Activated CD4-positive, alpha-beta memory T cell treated with anti-CD3 and anti-CD28 coated beads for 36 hours (primary cell): ENCODE measurements at regions of chr10 and their contacts with region 1.

Region 1: GRCh38 chr10:73167783-73168464 is at the starts of genes ECD and FAM149B1:
- DNase-seq: peak; percentile 96
- H3K4me3 Mint-ChIP-seq: peak within 1 kb of the TSS; percentile 100
- H3K27ac Mint-ChIP-seq: peak within 1 kb of the TSS; percentile 97
- H3K4me1 Mint-ChIP-seq: peaks cover 35% of the 10 kb centered on the region
- H3K27me3 Mint-ChIP-seq: no peaks in the 10 kb centered on the region
- total RNA-seq, gene ECD: 37.5 to 37.7 TPM
- total RNA-seq, gene FAM149B1: 12.8 to 14.6 TPM

Region 2: GRCh38 chr10:72354478-72355213 is 813.3 kb before region 1 on chr10 and contains the start of gene DNAJB12:
- CTCF ChIA-PET with region 1: no interaction called
- POLR2A ChIA-PET with region 1: no interaction called
- intact Hi-C with region 1: loop called (anchors 2 kb)
- DNase-seq: peak; percentile 93
- H3K4me3 Mint-ChIP-seq: peak within 1 kb of the TSS; percentile 97
- H3K27ac Mint-ChIP-seq: peak within 1 kb of the TSS; percentile 96
- H3K4me1 Mint-ChIP-seq: peaks cover 35% of the 10 kb centered on the region
- H3K27me3 Mint-ChIP-seq: no peaks in the 10 kb centered on the region
- total RNA-seq, gene DNAJB12: 18.9 to 19.8 TPM

Region 3: DNA sequence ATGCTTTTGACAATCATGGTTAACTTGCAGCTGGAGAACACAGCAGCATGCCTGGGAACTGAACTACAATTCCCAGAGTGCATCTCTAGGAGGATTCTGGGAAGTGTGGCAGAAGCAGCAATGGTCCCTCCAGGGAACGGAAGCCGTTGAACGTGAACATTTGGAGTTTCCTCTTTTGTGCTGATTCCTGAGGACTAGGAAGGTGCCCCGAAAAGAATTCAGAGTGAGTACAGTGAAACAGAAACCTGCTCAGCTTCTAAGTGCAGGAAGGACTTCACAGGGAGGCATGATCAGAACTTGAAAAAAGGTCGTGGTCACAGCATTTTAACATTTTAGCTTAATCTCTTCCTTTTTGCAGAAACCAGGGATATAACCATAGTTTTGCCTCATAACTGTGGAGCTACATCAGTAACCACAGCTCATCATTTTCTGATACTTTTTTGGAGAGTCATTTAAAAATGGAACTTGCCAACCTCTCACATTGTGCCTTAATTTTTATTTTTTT is 57.5 kb before region 1 on chr10 and contains the start of gene NUDT13:
- CTCF ChIA-PET with region 1: no interaction called
- POLR2A ChIA-PET with region 1: interaction called, 3 read pairs
- intact Hi-C with region 1: loop called (anchors 5 kb)
- DNase-seq: peak; percentile 61
- H3K4me3 Mint-ChIP-seq: peak within 1 kb of the TSS; percentile 85
- H3K27ac Mint-ChIP-seq: peak within 1 kb of the TSS; percentile 78
- H3K4me1 Mint-ChIP-seq: peaks cover 10% of the 10 kb centered on the region
- H3K27me3 Mint-ChIP-seq: no peaks in the 10 kb centered on the region
- total RNA-seq, gene NUDT13: 1.0 to 1.4 TPM

Region 4: DNA sequence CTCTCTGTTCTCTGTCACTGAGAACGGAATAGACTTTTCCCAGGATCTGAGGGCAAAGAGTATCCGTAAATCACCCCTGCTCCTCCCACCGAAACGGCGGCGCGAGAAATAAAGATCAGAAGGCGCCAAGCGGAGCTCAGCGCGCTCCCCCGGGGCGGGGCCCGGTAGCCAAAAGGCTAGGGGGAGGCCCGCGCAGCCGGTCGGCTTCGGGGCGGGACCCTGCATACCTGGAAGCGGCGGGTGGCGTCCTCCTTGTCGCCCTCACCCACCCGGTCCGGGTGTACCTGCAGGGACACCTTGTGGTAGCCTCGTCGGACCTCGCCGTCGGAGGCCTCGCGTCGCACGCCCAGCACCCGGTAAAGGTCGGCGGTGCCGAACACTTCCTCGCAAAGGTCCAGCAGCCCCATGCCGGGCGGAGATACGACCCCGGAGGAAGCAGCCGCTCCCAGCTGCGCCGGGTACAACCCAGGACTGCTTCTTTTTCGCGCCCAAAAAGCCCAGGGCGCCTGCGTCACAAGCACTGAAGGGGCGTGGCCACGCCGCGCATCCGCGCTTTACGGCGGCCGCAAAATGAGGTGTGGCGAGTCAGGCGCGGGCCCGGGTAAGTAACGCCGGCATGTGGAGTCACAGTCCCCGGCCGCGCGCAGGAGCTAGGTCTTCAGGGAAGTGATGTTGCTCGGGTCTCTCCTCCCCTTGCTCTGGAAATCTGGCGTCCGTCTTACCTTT is 79.0 kb after region 1 on chr10 and contains the start of gene DNAJC9:
- CTCF ChIA-PET with region 1: interaction called, 3 read pairs
- POLR2A ChIA-PET with region 1: interaction called, 3 read pairs
- intact Hi-C with region 1: loop called (anchors 1 kb)
- DNase-seq: peak; percentile 99
- H3K4me3 Mint-ChIP-seq: peak within 1 kb of the TSS; percentile 99
- H3K27ac Mint-ChIP-seq: peak within 1 kb of the TSS; percentile 94
- H3K4me1 Mint-ChIP-seq: peaks cover 61% of the 10 kb centered on the region
- H3K27me3 Mint-ChIP-seq: no peaks in the 10 kb centered on the region
- total RNA-seq, gene DNAJC9: 45.8 to 49.3 TPM

Region 5: GRCh38 chr10:73358331-73359279 is 190.7 kb after region 1 on chr10 and contains the start of gene CFAP70:
- CTCF ChIA-PET with region 1: no interaction called
- POLR2A ChIA-PET with region 1: no interaction called
- intact Hi-C with region 1: no loop called
- DNase-seq: peak; percentile 96
- H3K4me3 Mint-ChIP-seq: peak within 1 kb of the TSS; percentile 95
- H3K27ac Mint-ChIP-seq: peak within 1 kb of the TSS; percentile 79
- H3K4me1 Mint-ChIP-seq: peaks cover 14% of the 10 kb centered on the region
- H3K27me3 Mint-ChIP-seq: no peaks in the 10 kb centered on the region
- total RNA-seq, gene CFAP70: 0.33 to 0.80 TPM